ENCODE measurements at regions of chr1 and their contacts with region 1.

Region 1: DNA sequence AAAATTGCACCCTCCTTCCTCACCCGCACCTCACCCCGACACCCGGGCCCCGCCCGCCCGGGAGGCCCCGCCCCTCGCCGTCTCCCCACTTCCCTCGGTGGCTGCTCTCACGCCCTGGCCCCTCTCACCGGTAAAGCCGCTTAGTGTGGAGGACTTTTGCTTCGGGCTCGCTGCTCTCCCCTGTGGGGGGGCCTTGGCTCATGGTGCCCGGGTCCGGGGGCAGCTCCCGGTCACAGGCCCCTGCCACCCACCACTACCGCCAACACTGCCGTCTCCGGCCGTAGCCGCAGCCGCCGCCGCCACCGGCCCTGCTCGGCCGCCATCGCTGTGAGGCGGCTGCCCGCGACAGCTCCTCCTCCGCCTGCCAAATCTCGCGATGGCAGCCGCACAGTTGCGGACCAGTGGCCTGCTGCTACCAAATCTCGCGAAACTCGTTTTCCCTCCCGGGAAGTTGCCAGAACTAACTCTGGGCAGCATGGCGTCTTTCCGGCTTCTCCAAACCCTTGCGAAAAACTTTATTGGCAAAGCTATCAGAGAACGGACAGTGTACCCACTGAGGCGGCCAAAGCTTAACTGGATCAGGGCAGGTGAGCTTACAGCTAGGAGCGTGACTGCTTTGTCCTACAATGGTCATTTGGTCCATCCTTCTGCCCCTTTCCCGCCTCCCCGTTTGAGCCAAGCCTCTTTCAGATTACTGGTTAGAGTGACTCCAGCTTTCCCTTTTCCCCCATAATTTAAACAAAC is at the start of gene SMG5:
- DNase-seq: peak; percentile 99
- H3K4me3 Mint-ChIP-seq: peak within 1 kb of the TSS; percentile 99
- H3K27ac Mint-ChIP-seq: peak within 1 kb of the TSS; percentile 92
- H3K4me1 Mint-ChIP-seq: peaks cover 27% of the 10 kb centered on the region
- H3K27me3 Mint-ChIP-seq: no peaks in the 10 kb centered on the region
- total RNA-seq, gene SMG5: 77.1 to 83.4 TPM

Region 2: GRCh38 chr1:154974063-154974807 is 1308.4 kb before region 1 on chr1 and contains the start of gene CKS1B:
- CTCF ChIA-PET with region 1: no interaction called
- intact Hi-C with region 1: no loop called
- DNase-seq: peak; percentile 99
- H3K4me3 Mint-ChIP-seq: no peak within 1 kb of the TSS
- H3K27ac Mint-ChIP-seq: no peak within 1 kb of the TSS
- H3K4me1 Mint-ChIP-seq: peaks cover 32% of the 10 kb centered on the region
- H3K27me3 Mint-ChIP-seq: no peaks in the 10 kb centered on the region
- total RNA-seq, gene CKS1B: 283 to 291 TPM

Region 3: DNA sequence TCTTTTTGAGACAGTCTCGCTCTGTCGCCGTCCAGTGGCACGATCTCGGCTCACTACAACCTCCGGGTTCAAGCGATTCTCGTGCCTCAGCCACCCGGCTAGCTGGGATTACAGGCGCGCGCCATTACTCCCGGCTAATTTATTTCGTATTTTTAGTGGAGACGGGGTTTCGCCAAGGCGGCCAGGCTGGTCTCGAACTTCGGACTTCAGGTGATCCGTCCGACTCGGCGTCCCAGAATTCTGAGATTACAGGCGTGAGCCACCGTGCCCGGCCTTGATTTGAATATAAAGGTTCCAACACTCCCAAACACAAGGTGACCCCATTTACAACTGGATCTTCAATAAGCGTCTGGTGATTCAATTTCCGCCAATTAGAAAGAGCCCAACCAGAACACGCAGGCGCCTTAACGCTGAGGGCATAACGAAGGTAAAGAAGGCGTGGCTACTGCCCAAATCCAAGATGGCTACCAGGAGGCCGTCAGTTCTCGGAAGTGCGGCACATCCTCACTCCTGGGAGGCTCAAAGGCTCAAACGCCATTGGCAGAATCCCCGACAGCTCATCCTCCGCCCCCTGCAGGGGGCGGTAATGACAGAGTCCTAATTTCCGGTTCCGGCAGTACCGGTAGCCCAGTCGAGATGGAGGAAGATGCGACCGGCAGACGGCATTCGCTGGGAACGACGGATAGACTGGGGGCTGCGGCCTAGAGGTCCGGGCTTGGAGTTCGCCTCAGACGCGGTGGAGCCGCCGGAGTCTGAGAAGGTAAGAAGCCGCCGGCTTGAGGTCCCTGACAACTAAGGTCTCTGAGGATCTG is 89.0 kb before region 1 on chr1 and contains the start of gene SLC25A44:
- CTCF ChIA-PET with region 1: no interaction called
- intact Hi-C with region 1: loop called (anchors 1 kb)
- DNase-seq: peak; percentile 98
- H3K4me3 Mint-ChIP-seq: peak within 1 kb of the TSS; percentile 79
- H3K27ac Mint-ChIP-seq: peak within 1 kb of the TSS; percentile 74
- H3K4me1 Mint-ChIP-seq: peaks cover 59% of the 10 kb centered on the region
- H3K27me3 Mint-ChIP-seq: no peaks in the 10 kb centered on the region
- total RNA-seq, gene SLC25A44: 69.1 to 73.5 TPM

Region 4: GRCh38 chr1:156295391-156295947 is 12.8 kb after region 1 on chr1 and contains the start of gene GLMP:
- CTCF ChIA-PET with region 1: no interaction called
- intact Hi-C with region 1: loop called (anchors 1 kb)
- DNase-seq: peak; percentile 77
- H3K4me3 Mint-ChIP-seq: peak within 1 kb of the TSS; percentile 84
- H3K27ac Mint-ChIP-seq: no peak within 1 kb of the TSS
- H3K4me1 Mint-ChIP-seq: peaks cover 18% of the 10 kb centered on the region
- H3K27me3 Mint-ChIP-seq: no peaks in the 10 kb centered on the region
- total RNA-seq, gene GLMP: 10.0 to 10.1 TPM

Region 5: GRCh38 chr1:156346636-156347035 is 64.0 kb after region 1 on chr1:
- CTCF ChIA-PET with region 1: no interaction called
- intact Hi-C with region 1: no loop called
- DNase-seq: no peak
- H3K4me3 Mint-ChIP-seq: no peak overlapping the region
- H3K27ac Mint-ChIP-seq: no peak overlapping the region
- H3K4me1 Mint-ChIP-seq: no peaks in the 10 kb centered on the region
- H3K27me3 Mint-ChIP-seq: peaks cover 2% of the 10 kb centered on the region

Region 6: GRCh38 chr1:156474966-156475365 is 192.3 kb after region 1 on chr1:
- CTCF ChIA-PET with region 1: no interaction called
- intact Hi-C with region 1: no loop called
- DNase-seq: no peak
- H3K4me3 Mint-ChIP-seq: no peak overlapping the region
- H3K27ac Mint-ChIP-seq: no peak overlapping the region
- H3K4me1 Mint-ChIP-seq: peaks cover 14% of the 10 kb centered on the region
- H3K27me3 Mint-ChIP-seq: no peaks in the 10 kb centered on the region

Region 7: GRCh38 chr1:156524481-156524869 is 241.8 kb after region 1 on chr1:
- CTCF ChIA-PET with region 1: no interaction called
- intact Hi-C with region 1: no loop called
- DNase-seq: peak; percentile 45
- H3K4me3 Mint-ChIP-seq: no peak overlapping the region
- H3K27ac Mint-ChIP-seq: no peak overlapping the region
- H3K4me1 Mint-ChIP-seq: peaks cover 34% of the 10 kb centered on the region
- H3K27me3 Mint-ChIP-seq: no peaks in the 10 kb centered on the region